Body of pancreas (tissue), 4 donors: ENCODE measurements at regions of chr1 and their contacts with region 1.

Region 1: DNA sequence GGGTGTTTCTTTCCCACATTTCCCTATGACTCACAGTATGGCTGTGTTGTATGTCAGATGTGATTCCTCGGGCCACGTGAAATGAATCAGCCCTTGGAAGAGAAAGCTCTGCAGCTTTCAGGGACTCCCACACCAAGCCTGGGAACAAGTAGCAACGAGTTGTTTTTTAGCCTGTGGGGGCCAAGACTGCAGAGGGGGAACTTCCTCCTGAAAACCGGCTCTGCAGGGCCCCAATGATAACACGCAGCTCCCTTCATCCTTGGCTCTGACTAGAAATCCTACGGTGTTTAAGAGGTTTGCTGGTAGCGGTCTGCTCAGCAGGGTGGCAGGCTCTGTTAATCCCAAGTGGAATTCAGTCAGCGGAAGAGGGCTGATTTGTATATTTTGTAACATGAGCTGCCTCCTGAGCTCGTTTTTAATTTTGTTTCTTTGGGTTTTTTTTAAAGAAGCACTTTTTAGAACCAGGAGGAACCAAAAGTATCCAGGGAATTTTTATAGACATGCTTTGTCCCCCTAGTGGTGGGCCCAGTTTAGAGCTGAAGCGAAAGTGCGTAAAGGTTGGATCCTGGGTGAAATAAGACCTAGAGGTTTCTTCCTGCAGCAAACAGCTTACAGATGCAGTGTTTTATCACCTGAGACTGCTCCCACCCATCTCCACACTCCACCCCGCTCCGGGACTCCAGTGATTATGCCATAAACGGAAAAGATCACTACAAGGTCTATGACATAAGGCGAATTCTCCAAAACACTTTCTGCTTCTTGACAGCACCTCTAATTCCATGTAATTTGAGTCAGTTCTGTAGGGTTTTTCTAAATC is 48.8 kb downstream of the LAMC2 start:
- DNase-seq: peak; percentile 32 to 61 (median 54)
- ATAC-seq: peak; percentile 74
- H3K4me3 ChIP-seq: no peak overlapping the region
- H3K27ac ChIP-seq: peak overlapping the region in 3 of 4 donors; percentile 15 to 61 (median 19)
- H3K4me1 ChIP-seq: no peaks in the 10 kb centered on the region
- H3K27me3 ChIP-seq: no peaks in the 10 kb centered on the region
- CTCF ChIP-seq: peak; percentile 40 to 57 (median 56)
- POLR2A ChIP-seq: no peak

Region 2: DNA sequence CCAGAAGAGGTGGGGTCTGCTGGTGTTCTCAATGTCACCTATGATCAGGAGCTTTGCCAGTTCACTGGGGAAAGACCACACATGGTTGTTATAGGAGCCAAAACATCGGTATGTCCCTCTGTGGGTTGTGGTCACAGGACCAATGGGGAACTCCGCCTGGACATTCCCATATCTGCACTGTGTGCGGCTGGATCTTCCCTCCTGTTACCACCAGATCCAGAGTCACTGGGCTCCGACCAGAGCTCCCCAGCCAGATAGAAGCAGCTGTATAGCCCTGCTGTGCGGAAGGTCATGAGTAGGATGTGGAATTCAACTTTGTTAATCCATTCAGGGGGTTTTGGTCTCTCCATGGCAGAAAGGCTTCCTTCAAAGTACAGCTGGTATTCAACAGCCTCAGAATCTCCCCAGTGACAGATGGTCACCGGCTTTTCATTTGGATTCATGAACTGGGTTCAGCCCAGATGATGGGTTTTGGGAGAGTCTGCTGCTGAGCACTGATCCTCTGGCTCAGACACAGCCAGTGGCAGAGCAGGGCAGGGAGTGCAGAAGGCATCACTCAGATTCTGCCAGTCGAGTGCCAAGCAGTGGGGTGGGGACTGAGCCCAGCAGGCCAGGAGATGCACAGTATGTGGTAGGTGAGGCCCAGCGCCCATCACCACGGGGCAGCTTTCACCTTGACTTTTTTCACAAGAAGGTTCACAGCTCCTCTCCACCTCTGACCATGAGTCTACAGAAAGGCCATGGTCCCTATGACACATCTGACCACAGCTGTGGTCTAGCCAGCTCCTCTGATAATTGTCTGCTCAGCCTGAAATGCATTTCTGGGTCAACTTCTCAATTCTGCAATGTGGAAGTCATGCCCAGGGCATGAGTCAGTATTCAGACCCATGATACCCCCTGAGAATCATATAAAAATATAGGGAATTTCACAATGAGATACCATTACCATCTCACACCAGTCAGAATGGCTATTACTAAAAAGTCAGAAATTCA is 279.0 kb before region 1 on chr1:
- intact Hi-C with region 1: loop called (anchors 10 kb)
- DNase-seq: no peak
- ATAC-seq: no peak
- H3K4me3 ChIP-seq: no peak overlapping the region
- H3K27ac ChIP-seq: no peak overlapping the region
- H3K4me1 ChIP-seq: peaks cover 11% of the 10 kb centered on the region
- H3K27me3 ChIP-seq: peaks cover 0 to 11% of the 10 kb centered on the region in 2 donors
- CTCF ChIP-seq: no peak
- POLR2A ChIP-seq: no peak

Region 3: DNA sequence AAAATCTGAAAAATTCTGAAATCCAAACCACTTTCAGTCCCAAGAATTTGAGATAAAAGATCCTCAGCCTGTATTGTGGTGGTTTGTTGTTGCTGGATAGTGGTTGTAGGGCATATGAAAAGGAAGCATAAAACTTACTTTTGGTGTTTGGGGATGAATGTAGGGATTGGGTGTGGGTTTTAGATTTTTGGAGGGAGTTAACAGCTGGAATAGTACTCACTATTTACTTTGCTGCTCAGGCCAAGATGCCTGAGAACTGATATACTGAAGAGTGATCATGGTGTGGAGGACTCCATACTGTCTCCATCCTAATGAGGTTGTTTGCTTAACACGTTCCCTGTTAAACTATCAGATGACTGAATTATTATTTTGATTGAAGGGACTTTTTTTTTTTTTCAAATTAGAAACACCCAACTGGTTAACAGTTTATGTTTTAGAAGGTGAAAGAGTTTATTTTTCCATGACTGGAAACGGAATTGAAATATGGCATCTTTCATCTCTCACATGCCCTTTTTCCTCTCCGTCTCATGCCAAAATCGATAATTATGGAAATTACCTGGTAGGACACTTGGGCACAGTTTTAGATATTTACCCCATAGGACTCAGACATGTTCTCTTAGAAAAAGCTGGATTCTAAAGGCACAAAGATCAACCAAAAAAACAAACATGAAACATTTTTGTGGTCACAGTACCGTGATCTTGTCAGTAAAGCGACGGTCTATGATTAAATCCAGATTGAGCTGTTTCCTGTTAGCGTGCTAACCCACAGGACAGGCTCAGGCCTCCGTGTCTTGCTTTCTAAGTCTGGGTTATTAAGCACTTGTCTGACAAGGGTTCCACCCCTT is 607.3 kb after region 1 on chr1:
- intact Hi-C with region 1: no loop called
- DNase-seq: peak in 1 of 4 donors; percentile 46
- ATAC-seq: peak; percentile 63
- H3K4me3 ChIP-seq: no peak overlapping the region
- H3K27ac ChIP-seq: peak overlapping the region in 3 of 4 donors; percentile 39 to 77 (median 71)
- H3K4me1 ChIP-seq: peaks cover 16% of the 10 kb centered on the region
- H3K27me3 ChIP-seq: no peaks in the 10 kb centered on the region
- CTCF ChIP-seq: no peak
- POLR2A ChIP-seq: no peak